ENCODE measurements at regions of chr2 and their contacts with region 1.

Region 1: DNA sequence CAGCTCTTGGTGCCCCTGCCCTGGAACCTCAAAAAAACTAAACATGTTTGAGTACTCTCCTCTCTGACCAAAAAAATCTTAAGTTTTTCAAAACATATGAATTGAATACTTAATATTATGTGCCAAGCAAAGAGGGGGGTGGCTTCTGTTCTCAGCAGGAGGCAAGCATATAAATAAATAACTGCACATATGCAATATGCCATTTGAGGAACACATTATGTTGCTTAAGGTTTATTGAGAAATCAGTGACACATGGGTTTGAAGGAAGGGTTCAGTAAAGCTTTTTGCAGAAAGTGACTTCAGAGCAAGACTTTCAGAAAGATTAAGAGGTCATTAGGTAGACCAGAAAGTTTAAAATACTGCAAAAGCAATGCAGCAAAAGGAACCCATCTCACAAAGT is 429.2 kb downstream of the TDRD15 start:
- DNase-seq: peak; percentile 3
- ATAC-seq: no peak
- H3K4me3 ChIP-seq: no peak overlapping the region
- H3K27ac ChIP-seq: no peak overlapping the region
- H3K4me1 ChIP-seq: no peaks in the 10 kb centered on the region
- H3K27me3 ChIP-seq: no peaks in the 10 kb centered on the region
- CTCF ChIP-seq: no peak
- POLR2A ChIP-seq: no peak
- RAD21 ChIP-seq: no peak

Region 2: DNA sequence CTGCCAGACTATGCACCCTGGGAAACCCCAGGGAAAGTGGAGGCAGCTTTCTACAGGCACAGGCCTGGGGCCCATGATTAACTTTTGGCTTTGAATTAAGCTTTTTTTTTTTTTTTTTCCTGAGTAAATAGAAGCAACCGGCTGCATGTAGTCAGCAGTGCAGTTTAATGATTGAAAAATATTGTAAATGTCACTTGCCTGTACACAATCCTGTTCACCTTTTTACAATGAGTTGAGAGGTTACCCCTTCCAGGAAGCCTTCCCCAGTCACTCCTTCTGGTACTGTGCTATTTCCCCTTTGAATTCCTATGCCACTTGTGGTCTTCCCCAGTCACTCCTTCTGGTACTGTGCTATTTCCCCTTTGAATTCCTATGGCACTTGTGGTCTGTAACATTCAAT is 46.4 kb after region 1 on chr2:
- CTCF ChIA-PET with region 1: no interaction called
- POLR2A ChIA-PET with region 1: no interaction called
- dilution Hi-C with region 1: no loop called
- in situ Hi-C with region 1: no loop called
- intact Hi-C with region 1: no loop called
- DNase-seq: no peak
- ATAC-seq: no peak
- H3K4me3 ChIP-seq: no peak overlapping the region
- H3K27ac ChIP-seq: no peak overlapping the region
- H3K4me1 ChIP-seq: no peaks in the 10 kb centered on the region
- H3K27me3 ChIP-seq: no peaks in the 10 kb centered on the region
- CTCF ChIP-seq: no peak
- POLR2A ChIP-seq: no peak
- RAD21 ChIP-seq: no peak

Region 3: DNA sequence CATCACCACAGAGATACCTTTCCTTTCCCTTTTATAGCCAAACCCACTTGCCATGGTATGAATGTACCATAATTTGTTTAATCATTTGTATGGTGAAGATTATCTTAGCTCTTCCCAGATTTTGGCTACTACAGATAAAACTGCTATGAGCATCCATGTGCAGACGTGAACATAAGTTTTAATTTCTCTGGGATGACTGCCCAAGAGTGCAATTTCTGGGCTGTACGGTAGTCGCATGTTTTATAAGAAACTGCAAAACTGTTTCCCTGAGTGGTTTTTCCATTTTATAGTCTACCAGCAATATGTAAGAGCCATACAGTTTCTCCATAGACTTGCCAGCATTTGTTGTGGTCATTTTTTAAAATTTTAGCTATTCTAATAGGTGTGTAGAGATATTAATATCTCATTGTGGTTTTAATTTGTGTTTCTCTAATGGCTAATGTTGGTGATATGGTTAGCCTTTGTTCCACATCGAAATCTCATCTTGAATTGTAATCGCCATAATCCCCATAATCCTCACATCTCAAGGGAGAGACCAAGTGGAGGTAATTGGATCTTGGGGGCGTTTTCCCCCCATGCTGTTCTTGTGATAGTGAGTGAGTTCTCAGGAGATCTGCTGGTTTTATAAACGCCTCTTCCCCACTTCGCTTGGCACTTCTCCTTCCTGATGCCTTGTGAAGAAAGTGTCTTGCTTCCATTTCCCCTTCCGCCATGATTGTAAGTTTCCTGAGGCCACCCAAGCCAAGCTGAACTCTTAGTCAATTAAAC is 1203.5 kb after region 1 on chr2:
- CTCF ChIA-PET with region 1: no interaction called
- POLR2A ChIA-PET with region 1: no interaction called
- dilution Hi-C with region 1: no loop called
- in situ Hi-C with region 1: no loop called
- intact Hi-C with region 1: loop called (anchors 5 kb)
- DNase-seq: no peak
- ATAC-seq: no peak
- H3K4me3 ChIP-seq: no peak overlapping the region
- H3K27ac ChIP-seq: no peak overlapping the region
- H3K4me1 ChIP-seq: no peaks in the 10 kb centered on the region
- H3K27me3 ChIP-seq: no peaks in the 10 kb centered on the region
- CTCF ChIP-seq: no peak
- POLR2A ChIP-seq: no peak
- RAD21 ChIP-seq: no peak